ENCODE measurements at regions of chr1 and their contacts with region 1.

Region 1: DNA sequence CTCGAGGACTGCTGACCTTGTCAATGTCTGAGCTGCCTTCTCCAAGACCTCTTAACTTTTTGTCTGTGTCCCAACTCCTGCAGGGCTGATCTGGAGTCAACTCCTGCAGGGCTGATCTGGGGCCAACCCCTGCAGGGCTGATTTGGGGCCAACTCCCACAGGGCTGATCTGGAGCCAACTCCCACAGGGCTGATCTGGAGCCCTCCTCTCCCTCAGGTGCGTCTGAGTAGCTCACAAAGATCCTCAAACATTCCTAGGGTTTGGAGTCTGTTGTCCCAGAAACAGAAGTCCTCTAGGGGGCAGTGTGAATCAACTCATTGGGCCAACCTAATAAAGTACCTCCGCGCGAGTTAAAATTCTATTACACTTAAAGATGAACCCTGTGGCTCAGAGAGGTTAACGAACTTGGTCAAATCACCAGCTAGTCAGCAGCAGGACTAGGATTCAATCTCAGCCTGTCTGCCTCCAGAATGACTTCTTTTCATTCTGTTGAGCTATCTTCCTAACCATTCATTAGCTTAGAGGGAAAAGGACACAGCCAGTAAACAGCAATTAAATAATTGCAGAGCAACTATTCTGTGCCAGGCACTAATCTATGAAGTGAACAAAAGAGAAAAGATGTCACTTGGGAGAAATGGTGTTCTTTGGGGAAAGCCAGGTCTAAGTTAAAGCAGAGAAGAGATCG is 17.2 kb upstream of the RLF start:
- DNase-seq: peak; percentile 31
- ATAC-seq: peak; percentile 77 to 81

Region 2: GRCh38 chr1:40067023-40067422 is 77.0 kb before region 1 on chr1:
- intact Hi-C with region 1: no loop called
- DNase-seq: no peak
- ATAC-seq: no peak

Region 3: GRCh38 chr1:40332695-40333094 is 188.7 kb after region 1 on chr1:
- intact Hi-C with region 1: no loop called
- DNase-seq: no peak
- ATAC-seq: no peak

Region 4: DNA sequence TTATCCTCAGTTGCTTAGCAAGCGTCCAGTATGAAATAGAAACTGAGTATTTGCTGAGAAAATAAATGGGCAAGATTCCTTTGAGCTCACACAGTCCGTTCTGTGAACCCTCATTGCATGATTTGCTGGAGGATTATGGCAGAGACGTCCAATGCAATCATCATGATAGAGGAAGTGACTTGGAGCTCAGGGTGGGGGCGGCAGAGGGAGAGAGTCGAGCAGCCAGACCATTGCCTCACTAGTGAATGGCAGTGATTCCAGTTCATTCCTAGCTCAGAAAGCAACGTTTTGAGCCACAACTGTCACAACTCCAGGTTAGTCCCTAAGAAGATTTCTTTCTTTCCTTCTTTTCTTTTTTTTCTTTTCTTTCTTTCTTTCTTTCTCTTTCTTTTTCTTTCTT is 200.6 kb after region 1 on chr1:
- intact Hi-C with region 1: loop called in 1 of 2 experiments (anchors 5 kb)
- DNase-seq: peak; percentile 58
- ATAC-seq: peak; percentile 74 to 79

Region 5: DNA sequence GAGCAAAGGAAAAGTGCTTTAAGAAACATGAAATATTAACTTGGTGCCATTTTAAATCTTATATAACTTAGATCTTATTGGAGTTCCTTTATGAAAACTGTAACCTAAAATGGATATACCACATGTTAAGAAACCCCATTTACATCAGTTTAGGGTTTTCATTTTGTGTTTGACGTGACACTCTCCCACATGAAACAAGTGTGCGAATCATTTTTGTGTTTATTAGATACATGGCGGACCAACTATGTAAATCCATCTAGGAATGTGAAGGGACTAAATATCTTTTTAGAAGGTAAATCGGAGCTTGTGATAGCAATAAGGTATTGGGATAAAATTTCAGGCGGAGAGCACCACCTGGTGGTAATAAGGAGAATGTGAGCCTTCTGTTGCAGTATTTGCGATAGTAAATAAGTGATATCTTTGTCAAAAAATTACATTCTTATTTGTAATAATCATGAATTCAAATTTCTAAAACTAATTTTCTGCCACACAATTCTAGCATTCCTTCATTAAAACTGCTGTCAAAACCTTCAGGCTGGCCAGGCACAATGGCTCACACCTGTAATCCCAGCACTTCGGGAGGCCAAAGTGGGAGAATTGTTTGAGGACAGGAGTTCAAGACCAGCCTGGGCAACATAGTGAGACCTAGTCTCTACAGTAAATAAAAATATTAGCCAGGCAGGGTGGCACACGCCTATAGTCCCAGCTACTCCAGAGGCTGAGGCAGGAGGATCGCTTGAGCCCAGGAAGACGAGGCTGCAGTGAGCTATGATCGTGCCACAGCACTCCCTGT is 260.8 kb after region 1 on chr1:
- intact Hi-C with region 1: loop called (anchors 5 kb)
- DNase-seq: no peak
- ATAC-seq: peak in 1 of 2 donors; percentile 47